Activated naive CD4-positive, alpha-beta T cell treated with anti-CD3 and anti-CD28 coated beads for 36 hours (primary cell): ENCODE measurements at regions of chr3 and their contacts with region 1.

Region 1: DNA sequence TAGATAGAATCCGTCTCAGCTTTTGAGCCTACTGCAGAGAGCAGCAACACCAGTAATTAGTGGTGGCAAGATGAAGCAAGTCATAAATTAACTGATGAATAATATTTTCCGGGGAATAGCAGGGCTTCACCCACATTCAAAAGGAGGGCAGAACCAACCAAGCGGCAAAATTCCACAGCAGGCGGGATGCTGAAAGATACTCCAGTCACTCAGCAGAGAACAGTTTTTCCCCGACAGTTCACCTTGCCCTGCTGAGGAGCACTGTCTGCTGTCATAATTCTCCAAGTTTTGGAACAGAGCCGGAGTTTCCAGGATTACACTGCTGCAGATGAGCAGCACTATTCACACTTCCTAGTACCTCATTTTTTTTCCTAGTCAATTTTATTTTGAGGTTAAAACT is 274.7 kb downstream of the CD47 start:
- DNase-seq: no peak
- H3K4me3 Mint-ChIP-seq: no peak overlapping the region
- H3K27ac Mint-ChIP-seq: no peak overlapping the region
- H3K4me1 Mint-ChIP-seq: peaks cover 7% of the 10 kb centered on the region
- H3K27me3 Mint-ChIP-seq: no peaks in the 10 kb centered on the region

Region 2: DNA sequence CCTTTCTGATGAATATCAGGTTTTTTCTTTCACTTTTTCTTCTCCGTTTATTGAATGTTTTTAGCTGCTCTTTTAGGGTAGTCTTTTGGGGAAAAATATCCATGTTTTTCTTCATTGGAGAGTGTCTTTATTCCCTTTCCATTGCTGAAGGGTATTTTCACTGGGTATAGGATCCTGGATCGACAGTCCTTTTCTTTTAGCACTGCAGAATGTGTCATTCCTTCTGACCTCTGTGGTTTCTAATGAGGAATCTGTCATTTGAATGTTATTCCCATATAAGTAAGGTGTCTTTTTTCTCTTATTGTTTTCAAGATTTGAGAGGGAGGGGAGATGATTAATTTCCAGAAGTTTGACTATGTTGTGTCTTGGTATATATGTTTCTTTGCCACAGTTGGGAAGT is 196.6 kb before region 1 on chr3:
- CTCF ChIA-PET with region 1: interaction called, 11 read pairs
- intact Hi-C with region 1: no loop called
- DNase-seq: no peak
- H3K4me3 Mint-ChIP-seq: no peak overlapping the region
- H3K27ac Mint-ChIP-seq: no peak overlapping the region
- H3K4me1 Mint-ChIP-seq: peaks cover 58% of the 10 kb centered on the region
- H3K27me3 Mint-ChIP-seq: no peaks in the 10 kb centered on the region

Region 3: DNA sequence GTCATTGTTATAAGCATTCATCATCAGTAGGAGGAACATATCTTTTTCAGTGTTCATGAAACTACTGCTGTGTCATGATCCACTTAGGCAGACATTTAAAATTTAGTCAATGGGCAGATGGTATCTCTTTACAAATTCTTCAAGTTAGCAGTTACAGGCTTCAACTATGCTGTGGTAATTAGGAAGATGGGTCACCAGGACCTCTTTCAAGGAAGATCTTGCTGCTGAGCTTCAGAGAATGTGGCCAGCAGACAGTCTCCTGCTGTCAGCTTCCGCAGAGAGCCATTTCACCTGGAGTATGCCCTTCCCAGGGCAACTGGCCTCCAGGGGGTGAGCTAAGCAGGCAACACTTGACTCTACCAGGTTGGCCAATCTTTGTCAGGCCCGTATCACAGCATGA is 386.7 kb after region 1 on chr3:
- CTCF ChIA-PET with region 1: no interaction called
- intact Hi-C with region 1: no loop called
- DNase-seq: no peak
- H3K4me3 Mint-ChIP-seq: no peak overlapping the region
- H3K27ac Mint-ChIP-seq: no peak overlapping the region
- H3K4me1 Mint-ChIP-seq: peaks cover 24% of the 10 kb centered on the region
- H3K27me3 Mint-ChIP-seq: no peaks in the 10 kb centered on the region